HepG2 (cell line): ENCODE measurements at regions of chr6 and their contacts with region 1.

Region 1: DNA sequence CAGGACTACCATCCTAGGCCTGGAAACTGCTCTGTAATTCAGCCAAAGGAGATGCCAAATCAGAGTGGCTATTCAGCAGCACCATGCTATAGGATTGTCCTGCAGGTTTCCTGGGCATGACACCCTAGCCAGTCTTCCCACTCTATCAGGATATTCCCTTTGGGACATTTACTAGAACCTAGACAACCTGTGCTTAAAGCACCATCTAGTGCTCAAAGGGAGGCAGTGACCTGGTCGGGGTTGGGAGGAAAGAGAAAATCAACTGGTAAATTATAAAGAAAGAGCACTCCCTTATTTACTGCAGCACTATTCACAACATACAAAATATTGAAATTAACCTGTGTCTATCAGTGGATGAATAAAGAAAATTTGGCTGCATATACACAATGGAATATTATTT is 67.2 kb upstream of the SMLR1 start:
- DNase-seq: peak; percentile 64
- ATAC-seq: peak; percentile 99
- H3K4me3 ChIP-seq: no peak overlapping the region
- H3K27ac ChIP-seq: no peak overlapping the region
- H3K4me1 ChIP-seq: no peaks in the 10 kb centered on the region
- H3K27me3 ChIP-seq: peaks cover 0 to 14% of the 10 kb centered on the region in 2 experiments; a peak in 2 of 5 replicates
- CTCF ChIP-seq: peak; percentile 77
- EP300 ChIP-seq: no peak
- POLR2A ChIP-seq: no peak
- RAD21 ChIP-seq: peak; percentile 79

Region 2: DNA sequence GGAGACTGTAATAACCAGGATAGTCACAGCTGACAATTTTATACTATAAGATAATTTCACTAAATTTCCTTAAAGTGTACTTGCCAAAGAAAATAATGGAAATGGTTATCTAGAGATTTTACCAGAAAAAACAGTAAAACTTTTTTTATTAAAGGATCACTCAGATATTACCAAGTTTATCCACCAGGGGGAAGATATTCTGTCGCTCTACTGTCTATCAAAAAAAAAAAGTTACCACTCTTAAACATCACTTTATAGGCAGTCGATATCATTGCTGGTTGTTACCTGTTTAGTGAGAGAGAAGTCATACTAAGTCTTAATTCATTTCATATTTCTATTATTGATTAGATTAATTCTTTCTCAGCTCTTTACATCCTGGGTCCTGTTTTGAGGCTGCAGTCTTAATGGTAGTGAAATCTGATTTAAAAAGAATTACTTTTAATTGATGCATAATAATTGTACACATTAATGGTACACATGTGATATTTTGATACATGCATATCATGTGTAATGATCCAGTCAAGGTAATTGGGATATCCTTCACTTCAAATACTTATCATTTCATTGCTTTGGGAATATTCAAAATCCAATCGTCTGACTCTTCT is 722.7 kb before region 1 on chr6:
- CTCF ChIA-PET with region 1: interaction called, 6 read pairs
- POLR2A ChIA-PET with region 1: no interaction called
- in situ Hi-C with region 1: no loop called
- intact Hi-C with region 1: loop called (anchors 1 kb)
- DNase-seq: no peak
- ATAC-seq: no peak
- H3K4me3 ChIP-seq: no peak overlapping the region
- H3K27ac ChIP-seq: no peak overlapping the region
- H3K4me1 ChIP-seq: no peaks in the 10 kb centered on the region
- H3K27me3 ChIP-seq: no peaks in the 10 kb centered on the region
- CTCF ChIP-seq: 0 out of 2 replicates have a peak, but pooled peaks have one; percentile 3
- EP300 ChIP-seq: no peak
- POLR2A ChIP-seq: no peak
- RAD21 ChIP-seq: no peak

Region 3: GRCh38 chr6:130293800-130294199 is 466.2 kb before region 1 on chr6:
- CTCF ChIA-PET with region 1: no interaction called
- POLR2A ChIA-PET with region 1: no interaction called
- in situ Hi-C with region 1: no loop called
- intact Hi-C with region 1: loop called (anchors 10 kb)
- DNase-seq: peak; percentile 23
- ATAC-seq: peak; percentile 89
- H3K4me3 ChIP-seq: no peak overlapping the region
- H3K27ac ChIP-seq: no peak overlapping the region
- H3K4me1 ChIP-seq: no peaks in the 10 kb centered on the region
- H3K27me3 ChIP-seq: no peaks in the 10 kb centered on the region
- CTCF ChIP-seq: peak; percentile 61
- EP300 ChIP-seq: no peak
- POLR2A ChIP-seq: no peak
- RAD21 ChIP-seq: no peak

Region 4: DNA sequence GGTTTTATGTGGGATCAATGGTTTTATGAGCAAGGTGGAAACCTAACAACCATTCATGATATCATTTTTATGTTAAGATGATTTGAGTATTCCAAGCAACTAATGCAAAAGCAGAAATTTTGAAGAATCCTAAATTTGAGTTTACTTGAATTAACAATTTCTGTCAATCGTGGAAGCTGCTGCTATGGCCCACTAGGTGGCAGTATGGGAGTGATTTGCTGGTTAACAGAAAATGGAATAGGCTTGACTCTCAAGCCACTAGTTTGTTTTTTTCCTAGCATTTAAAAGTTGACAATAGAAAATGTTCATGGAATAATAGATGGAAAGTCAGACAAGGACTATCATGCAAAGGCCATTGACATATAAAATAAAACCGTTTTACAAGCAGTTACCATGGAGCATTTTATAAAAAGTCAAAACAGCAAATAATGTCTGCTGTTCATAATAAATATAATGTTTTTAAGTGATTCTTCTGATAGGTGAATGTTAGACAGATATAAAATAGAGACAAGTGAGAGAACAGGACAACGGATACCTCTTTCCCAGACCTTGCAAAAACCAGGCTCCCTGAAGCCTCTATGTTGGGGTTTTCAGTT is 437.2 kb before region 1 on chr6:
- CTCF ChIA-PET with region 1: interaction called, 9 read pairs
- POLR2A ChIA-PET with region 1: no interaction called
- in situ Hi-C with region 1: loop called (anchors 10 kb)
- intact Hi-C with region 1: loop called (anchors 1 kb)
- DNase-seq: peak; percentile 55
- ATAC-seq: peak; percentile 77
- H3K4me3 ChIP-seq: no peak overlapping the region
- H3K27ac ChIP-seq: no peak overlapping the region
- H3K4me1 ChIP-seq: no peaks in the 10 kb centered on the region
- H3K27me3 ChIP-seq: no peaks in the 10 kb centered on the region
- CTCF ChIP-seq: peak; percentile 81
- EP300 ChIP-seq: no peak
- POLR2A ChIP-seq: no peak
- RAD21 ChIP-seq: peak; percentile 71

Region 5: DNA sequence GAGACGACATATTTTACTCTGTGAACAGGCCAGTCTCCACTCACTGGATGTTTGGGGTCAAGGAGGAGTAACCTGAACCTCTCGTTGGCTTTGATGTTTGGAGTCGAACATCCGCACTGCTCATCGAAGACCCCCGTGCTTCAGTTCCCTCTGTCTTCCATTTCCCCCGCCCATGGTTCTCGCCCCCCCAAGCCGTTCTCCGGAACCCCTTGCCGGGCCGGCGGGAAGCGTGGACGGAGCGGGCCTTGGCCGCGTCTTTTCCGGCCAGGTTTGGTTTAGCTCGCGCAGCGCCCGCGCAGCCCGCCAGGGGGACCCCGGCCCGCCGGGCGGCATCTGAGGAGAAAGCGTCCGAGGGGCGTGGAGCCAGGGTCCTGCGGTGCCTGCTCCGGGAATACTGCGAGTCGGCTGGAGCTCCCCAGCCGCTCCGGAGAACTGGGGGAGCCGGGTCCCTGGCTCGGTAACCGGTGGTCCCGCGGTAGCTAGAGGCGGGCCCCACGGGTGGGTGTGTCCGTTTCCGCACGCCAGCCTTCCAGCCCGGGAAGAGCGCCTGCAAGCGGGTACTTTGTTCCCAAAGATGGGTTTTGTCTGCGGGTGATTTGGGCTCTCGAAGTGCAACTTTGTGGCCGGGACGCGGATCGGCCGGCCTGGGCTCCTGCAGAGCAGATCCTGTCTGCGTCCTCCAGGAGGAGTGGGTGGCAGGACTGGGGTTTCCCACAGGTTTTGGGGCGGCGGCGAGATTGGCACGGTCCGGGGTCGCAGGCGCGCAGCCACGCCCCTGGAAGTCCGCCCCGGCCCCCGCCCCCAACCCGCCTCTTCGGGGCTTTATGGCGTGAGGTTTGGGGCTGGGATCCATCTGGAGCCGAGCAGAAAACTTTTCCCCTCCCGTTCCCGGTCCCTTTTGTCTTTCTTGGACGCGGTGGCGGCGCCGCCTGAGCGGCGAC is 394.6 kb before region 1 on chr6 and contains the start of gene TMEM200A:
- CTCF ChIA-PET with region 1: interaction called, 7 read pairs
- POLR2A ChIA-PET with region 1: no interaction called
- in situ Hi-C with region 1: no loop called
- intact Hi-C with region 1: loop called (anchors 1 kb)
- DNase-seq: peak; percentile 40
- ATAC-seq: peak; percentile 95
- H3K4me3 ChIP-seq: peak within 1 kb of the TSS; percentile 55 to 73 (median 56)
- H3K27ac ChIP-seq: no peak within 1 kb of the TSS
- H3K4me1 ChIP-seq: peaks cover 9% of the 10 kb centered on the region
- H3K27me3 ChIP-seq: peaks cover 2 to 34% of the 10 kb centered on the region in 2 experiments; a peak in 4 of 5 replicates
- CTCF ChIP-seq: peak; percentile 84
- EP300 ChIP-seq: no peak
- POLR2A ChIP-seq: no peak
- RAD21 ChIP-seq: peak; percentile 85
- total RNA-seq, gene TMEM200A: not detected in 2 replicates

Region 6: GRCh38 chr6:130872250-130873095 is 112.5 kb after region 1 on chr6:
- CTCF ChIA-PET with region 1: no interaction called
- POLR2A ChIA-PET with region 1: no interaction called
- in situ Hi-C with region 1: no loop called
- intact Hi-C with region 1: loop called (anchors 1 kb)
- DNase-seq: peak; percentile 62
- ATAC-seq: peak; percentile 86
- H3K4me3 ChIP-seq: no peak overlapping the region
- H3K27ac ChIP-seq: peak overlapping the region; percentile 0
- H3K4me1 ChIP-seq: peaks cover 10% of the 10 kb centered on the region; the same call in 1 of the 2 replicates
- H3K27me3 ChIP-seq: no peaks in the 10 kb centered on the region
- CTCF ChIP-seq: peak; percentile 94
- EP300 ChIP-seq: no peak
- POLR2A ChIP-seq: no peak
- RAD21 ChIP-seq: peak; percentile 77